GM10248 (cell line): ENCODE measurements at regions of chr14 and their contacts with region 1.

Region 1: GRCh38 chr14:73403181-73403752 is 55.1 kb downstream of the NUMB start:
- DNase-seq: no peak
- CTCF ChIP-seq: no peak

Region 2: DNA sequence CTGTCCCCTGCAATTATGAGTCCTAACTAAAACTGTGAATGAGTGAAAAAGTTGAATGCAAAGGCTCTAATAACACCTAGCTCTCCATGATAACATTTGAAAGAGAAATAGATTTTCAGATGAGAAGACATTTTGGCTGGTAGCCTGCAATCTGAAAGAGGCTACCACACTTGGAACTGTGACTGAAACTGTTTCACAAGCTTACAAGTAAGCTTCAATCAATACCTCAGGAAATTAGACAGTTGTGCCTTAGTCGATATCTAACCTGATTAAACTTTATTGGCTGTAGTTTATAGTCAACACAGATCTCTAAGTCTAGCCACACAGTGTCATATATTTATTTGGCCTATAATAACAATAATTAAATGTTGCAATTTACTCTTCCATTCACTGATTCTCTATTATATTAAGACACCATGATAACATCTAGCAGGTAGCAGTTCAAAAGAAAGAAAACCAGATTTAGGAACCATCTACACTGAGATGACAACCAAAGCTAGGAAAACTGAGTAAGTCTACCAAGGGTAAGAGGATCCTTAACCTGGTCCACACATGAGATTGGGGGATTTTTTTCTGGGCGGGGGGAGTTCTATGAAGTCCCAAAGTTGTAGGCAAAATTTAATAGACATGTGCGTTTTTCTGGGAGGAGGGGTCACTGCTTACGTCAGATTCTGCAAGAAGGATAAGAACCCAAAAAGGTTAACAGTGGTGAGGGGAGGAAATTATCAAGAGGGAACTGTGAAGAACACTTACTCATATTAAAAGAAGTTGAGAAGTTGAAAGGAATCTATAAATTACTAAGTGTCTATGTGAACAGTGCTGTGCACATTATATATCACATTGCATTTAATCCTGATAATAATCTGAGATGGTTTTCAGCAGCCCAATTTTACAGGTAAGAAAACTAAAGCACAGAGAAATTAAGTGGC is 10.7 kb before region 1 on chr14:
- CTCF ChIA-PET with region 1: interaction called, 10 read pairs
- POLR2A ChIA-PET with region 1: no interaction called
- DNase-seq: peak; percentile 19
- CTCF ChIP-seq: no peak

Region 3: DNA sequence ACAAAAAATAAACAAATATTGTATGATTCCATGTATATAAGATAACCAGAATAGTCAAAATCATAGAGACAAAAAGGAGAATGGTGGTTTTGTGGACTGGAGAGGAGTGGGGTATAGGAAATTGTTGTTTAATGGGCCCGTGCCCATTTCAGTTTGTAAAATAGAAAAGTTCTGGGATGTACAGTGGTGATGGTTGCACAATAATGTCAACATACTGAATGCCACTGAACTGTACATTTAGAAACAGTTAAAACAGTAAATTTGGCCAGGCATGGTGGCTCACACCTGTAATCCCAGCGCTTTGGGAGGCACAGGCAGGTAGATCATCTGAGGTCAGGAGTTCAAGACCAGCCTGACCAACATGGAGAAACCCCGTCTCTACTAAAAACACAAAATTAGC is 15.0 kb after region 1 on chr14:
- CTCF ChIA-PET with region 1: interaction called, 13 read pairs
- POLR2A ChIA-PET with region 1: interaction called, 3 read pairs
- DNase-seq: no peak
- CTCF ChIP-seq: no peak

Region 4: DNA sequence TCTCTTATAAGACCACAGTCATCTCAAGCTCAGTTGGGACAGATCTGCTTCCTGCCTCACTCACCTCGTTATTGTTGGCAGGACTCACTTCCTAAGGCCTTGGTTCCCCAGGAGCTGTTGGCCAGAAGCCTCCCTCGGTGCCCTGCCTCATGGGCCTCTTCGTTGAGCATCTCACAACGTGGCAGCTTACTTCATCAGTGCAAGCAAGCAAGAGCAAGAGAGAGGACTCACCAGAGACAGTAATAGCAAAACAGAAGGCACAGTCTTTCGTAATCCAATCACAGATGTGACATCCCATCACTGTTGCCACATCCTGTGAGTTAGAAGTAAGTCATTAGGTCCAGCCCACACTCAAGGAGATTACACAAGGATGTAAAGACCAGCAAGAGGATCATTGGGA is 60.1 kb after region 1 on chr14:
- CTCF ChIA-PET with region 1: no interaction called
- POLR2A ChIA-PET with region 1: no interaction called
- DNase-seq: no peak
- CTCF ChIP-seq: no peak